Mammary epithelial cell (primary cell): ENCODE measurements at regions of chr7 and their contacts with region 1.

Region 1: GRCh38 chr7:48299580-48300169 is 128.4 kb downstream of the ABCA13 start:
- DNase-seq: peak; percentile 77
- H3K4me3 ChIP-seq: no peak overlapping the region
- H3K27ac ChIP-seq: peak overlapping the region; percentile 61
- H3K4me1 ChIP-seq: peaks cover 14% of the 10 kb centered on the region
- H3K27me3 ChIP-seq: no peaks in the 10 kb centered on the region
- CTCF ChIP-seq: peak; percentile 77 to 92

Region 2: GRCh38 chr7:47945261-47946001 is 354.2 kb before region 1 on chr7:
- CTCF ChIA-PET with region 1: no interaction called
- dilution Hi-C with region 1: no loop called
- in situ Hi-C with region 1: no loop called
- intact Hi-C with region 1: loop called (anchors 5 kb)
- DNase-seq: peak; percentile 30
- H3K4me3 ChIP-seq: no peak overlapping the region
- H3K27ac ChIP-seq: no peak overlapping the region
- H3K4me1 ChIP-seq: peaks cover 16% of the 10 kb centered on the region
- H3K27me3 ChIP-seq: no peaks in the 10 kb centered on the region
- CTCF ChIP-seq: peak; percentile 66 to 74

Region 3: DNA sequence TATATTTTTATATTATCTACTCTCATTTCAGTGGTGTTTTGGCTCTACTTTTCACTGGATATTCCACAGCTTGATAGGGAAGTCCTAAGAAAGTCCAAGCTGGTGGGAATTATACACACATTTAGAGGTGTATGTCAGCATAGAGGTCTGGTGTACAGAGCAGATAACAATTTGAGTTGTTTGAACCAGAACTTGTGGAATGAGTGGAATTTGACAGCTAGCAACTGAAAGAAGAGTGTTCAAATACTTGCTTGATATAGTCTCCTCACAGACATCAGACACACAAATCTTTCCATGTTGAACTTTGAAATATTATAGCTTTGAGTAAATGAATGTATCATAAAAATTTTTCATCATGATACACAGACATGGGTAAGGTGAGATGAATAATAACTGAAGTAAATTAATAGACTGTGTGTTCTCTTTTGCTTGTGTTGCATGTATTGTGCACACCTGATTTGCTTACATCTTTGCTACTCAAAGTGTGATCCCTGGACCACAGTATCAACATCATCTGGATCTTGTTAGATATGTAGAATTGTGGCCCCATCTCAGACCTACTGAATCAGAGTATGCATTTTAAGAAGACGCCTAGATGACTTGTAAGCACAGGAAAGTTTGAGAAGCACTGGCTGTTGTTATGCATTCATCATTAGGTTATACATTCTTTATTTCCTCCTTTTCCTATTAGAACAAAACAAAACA is 36.9 kb before region 1 on chr7:
- CTCF ChIA-PET with region 1: no interaction called
- dilution Hi-C with region 1: no loop called
- in situ Hi-C with region 1: no loop called
- intact Hi-C with region 1: no loop called
- DNase-seq: no peak
- H3K4me3 ChIP-seq: no peak overlapping the region
- H3K27ac ChIP-seq: no peak overlapping the region
- H3K4me1 ChIP-seq: no peaks in the 10 kb centered on the region
- H3K27me3 ChIP-seq: no peaks in the 10 kb centered on the region
- CTCF ChIP-seq: no peak

Region 4: GRCh38 chr7:48274662-48275061 is 25.0 kb before region 1 on chr7:
- CTCF ChIA-PET with region 1: interaction called, 4 read pairs
- dilution Hi-C with region 1: no loop called
- in situ Hi-C with region 1: no loop called
- intact Hi-C with region 1: loop called (anchors 2 kb)
- DNase-seq: peak; percentile 63
- H3K4me3 ChIP-seq: no peak overlapping the region
- H3K27ac ChIP-seq: no peak overlapping the region
- H3K4me1 ChIP-seq: peaks cover 16% of the 10 kb centered on the region
- H3K27me3 ChIP-seq: no peaks in the 10 kb centered on the region
- CTCF ChIP-seq: no peak

Region 5: DNA sequence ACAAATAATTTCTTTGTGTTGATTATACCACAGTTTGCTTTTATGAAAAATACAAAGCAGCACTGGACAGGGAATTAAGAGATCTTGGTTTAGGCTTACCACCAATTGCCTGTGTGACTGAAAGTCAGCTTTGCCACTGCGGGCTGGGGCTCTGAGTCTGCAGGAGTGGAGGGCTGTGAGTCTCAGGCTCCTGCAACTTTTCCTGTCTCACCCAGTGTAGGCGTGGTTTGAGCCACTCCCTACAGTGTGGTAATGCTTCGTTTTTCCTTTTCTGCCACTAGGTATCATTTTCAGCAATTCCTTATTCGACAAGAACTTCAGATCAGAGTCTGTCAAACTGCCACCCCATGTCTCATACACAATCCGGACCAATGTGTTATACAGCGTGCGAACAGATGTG is 52.2 kb after region 1 on chr7:
- CTCF ChIA-PET with region 1: no interaction called
- dilution Hi-C with region 1: no loop called
- in situ Hi-C with region 1: no loop called
- intact Hi-C with region 1: loop called (anchors 1 kb)
- DNase-seq: no peak
- H3K4me3 ChIP-seq: no peak overlapping the region
- H3K27ac ChIP-seq: no peak overlapping the region
- H3K4me1 ChIP-seq: no peaks in the 10 kb centered on the region
- H3K27me3 ChIP-seq: no peaks in the 10 kb centered on the region
- CTCF ChIP-seq: no peak

Region 6: GRCh38 chr7:48708635-48709034 is 409.0 kb after region 1 on chr7:
- CTCF ChIA-PET with region 1: no interaction called
- dilution Hi-C with region 1: no loop called
- in situ Hi-C with region 1: no loop called
- intact Hi-C with region 1: loop called (anchors 1 kb)
- DNase-seq: peak; percentile 44
- H3K4me3 ChIP-seq: no peak overlapping the region
- H3K27ac ChIP-seq: no peak overlapping the region
- H3K4me1 ChIP-seq: peaks cover 9% of the 10 kb centered on the region
- H3K27me3 ChIP-seq: no peaks in the 10 kb centered on the region
- CTCF ChIP-seq: peak; percentile 44 to 59

Region 7: DNA sequence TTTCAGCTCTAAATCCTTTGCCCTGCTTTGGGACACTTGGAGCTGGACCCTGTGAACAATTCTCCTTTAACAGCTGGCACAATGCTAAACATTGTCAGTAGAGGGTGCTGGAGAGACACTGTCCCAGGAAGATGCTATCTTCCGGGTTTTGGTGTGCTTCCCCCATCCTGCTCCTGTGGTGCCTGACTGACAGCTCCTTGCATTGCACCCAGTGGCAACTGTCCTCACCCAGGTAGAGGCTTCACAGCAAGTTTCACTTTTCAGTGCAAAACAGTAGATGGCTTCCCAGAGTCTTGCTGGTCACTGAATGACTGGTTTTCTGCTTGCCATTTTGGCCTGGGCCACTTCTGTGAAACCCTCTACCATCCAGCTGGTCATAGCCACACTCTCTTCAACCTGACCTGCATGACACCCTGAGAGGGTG is 701.9 kb after region 1 on chr7:
- CTCF ChIA-PET with region 1: no interaction called
- dilution Hi-C with region 1: no loop called
- in situ Hi-C with region 1: no loop called
- intact Hi-C with region 1: loop called (anchors 1 kb)
- DNase-seq: peak; percentile 31
- H3K4me3 ChIP-seq: no peak overlapping the region
- H3K27ac ChIP-seq: no peak overlapping the region
- H3K4me1 ChIP-seq: no peaks in the 10 kb centered on the region
- H3K27me3 ChIP-seq: peaks cover 2% of the 10 kb centered on the region
- CTCF ChIP-seq: peak; percentile 75 to 83

Region 8: DNA sequence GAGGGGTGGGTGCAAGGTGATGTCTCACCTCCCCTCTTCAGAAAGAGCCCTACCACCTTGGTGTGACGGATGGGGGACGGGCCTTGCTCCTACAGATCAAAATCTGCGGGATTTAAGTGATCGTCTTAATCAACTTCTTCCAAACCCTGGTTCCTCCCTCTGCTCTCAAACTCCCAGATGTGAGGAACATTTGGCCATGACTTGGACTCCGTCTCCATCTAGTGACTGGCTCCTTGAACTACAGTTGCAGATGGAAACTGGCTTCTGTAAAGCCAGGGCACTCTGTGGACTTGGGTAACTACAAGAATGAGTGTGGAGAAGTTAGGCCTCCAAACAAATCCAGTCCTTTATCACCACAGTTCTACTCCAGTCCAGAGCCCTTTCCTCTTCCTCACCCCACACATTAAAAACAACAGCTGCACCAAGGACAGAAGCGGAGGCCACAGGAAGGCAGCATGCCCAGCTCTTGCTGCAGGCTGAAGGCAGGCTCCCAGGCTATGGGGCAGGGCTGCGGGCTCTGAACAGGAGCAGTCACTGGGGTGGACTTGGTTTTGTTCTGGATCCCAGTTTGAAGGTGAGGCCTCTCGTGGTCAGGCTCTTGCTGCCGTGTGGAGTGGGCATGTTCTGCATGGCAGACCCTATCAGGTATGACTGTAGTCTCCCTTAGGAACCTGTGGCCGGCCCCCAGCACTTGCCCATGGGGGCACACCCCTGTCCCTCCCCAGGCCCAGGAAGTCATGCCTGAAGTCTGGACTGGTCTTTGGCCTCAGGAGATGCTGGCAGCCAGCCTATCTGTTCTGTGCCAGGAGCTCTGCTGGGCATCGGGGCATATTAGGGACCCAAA is 1553.2 kb after region 1 on chr7:
- CTCF ChIA-PET with region 1: no interaction called
- dilution Hi-C with region 1: no loop called
- in situ Hi-C with region 1: no loop called
- intact Hi-C with region 1: loop called (anchors 1 kb)
- DNase-seq: peak; percentile 61
- H3K4me3 ChIP-seq: no peak overlapping the region
- H3K27ac ChIP-seq: no peak overlapping the region
- H3K4me1 ChIP-seq: no peaks in the 10 kb centered on the region
- H3K27me3 ChIP-seq: no peaks in the 10 kb centered on the region
- CTCF ChIP-seq: peak; percentile 94 to 96